Psoas muscle (tissue), 8 donors: ENCODE measurements at regions of chr3 and their contacts with region 1.

Region 1: DNA sequence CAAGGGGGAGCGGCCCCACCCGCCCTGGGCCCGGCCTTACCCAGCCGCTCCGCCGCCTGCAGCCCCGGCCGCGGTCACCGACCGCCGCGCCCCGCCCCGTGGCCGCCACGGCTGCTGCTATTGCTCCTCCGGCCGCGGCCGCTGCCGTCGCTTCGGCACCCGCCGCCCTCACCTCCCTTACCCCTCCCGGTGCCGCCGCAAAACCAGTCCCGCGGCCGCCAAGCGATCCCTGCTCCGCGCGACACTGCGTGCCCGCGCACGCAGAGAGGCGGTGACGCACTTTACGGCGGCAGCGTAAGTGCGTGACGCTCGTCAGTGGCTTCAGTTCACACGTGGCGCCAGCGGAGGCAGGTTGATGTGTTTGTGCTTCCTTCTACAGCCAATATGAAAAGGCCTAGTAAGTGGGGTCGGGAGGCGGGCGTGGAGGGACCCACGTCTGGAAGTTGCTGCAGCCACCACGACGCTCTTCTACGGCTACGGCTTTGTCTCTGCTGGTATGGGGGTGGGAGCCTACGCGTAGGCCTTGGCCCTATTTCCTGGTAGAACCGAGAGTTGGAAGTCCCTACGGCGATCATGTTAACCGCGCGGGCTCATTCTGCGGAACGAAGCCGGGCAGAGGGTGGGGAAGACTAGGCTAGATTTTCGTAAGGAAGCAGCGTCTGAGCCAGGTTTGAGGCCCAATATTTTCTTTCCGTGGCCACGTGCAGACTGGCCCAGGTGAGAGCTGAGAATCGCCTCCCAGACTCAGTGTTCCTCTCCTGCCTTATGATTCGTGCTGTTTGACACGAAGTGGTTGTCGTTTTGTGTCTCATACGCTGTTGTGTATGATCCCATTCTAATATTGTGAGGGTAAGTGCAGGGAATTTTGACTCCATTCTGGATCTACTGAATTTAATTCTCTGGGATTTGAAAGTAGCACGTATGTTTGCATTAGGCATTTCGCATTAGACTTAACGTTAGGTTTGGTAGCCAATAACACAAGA is at the starts of genes GNL3 and PBRM1:
- DNase-seq: peak; percentile 95 to 97
- ATAC-seq: peak; percentile 93 to 95 (median 94)
- H3K4me3 ChIP-seq: peak within 1 kb of the TSS; percentile 91
- H3K27ac ChIP-seq: peak within 1 kb of the TSS; percentile 93
- H3K4me1 ChIP-seq: peaks cover 39% of the 10 kb centered on the region
- H3K27me3 ChIP-seq: no peaks in the 10 kb centered on the region
- CTCF ChIP-seq: no peak
- total RNA-seq, gene GNL3: 47.3 to 109 (median 67.9) TPM
- total RNA-seq, gene PBRM1: 38.0 to 46.7 (median 39.9) TPM

Region 2: GRCh38 chr3:52455283-52456168 is 230.5 kb before region 1 on chr3 and contains the start of gene NISCH:
- intact Hi-C with region 1: loop called in 1 of 2 experiments (anchors 5 kb)
- DNase-seq: peak; percentile 94 to 96
- ATAC-seq: peak; percentile 59 to 70 (median 63)
- H3K4me3 ChIP-seq: peak within 1 kb of the TSS; percentile 73
- H3K27ac ChIP-seq: peak within 1 kb of the TSS; percentile 90
- H3K4me1 ChIP-seq: peaks cover 36% of the 10 kb centered on the region
- H3K27me3 ChIP-seq: no peaks in the 10 kb centered on the region
- CTCF ChIP-seq: no peak
- total RNA-seq, gene NISCH: 16.7 to 33.4 (median 28.1) TPM

Region 3: DNA sequence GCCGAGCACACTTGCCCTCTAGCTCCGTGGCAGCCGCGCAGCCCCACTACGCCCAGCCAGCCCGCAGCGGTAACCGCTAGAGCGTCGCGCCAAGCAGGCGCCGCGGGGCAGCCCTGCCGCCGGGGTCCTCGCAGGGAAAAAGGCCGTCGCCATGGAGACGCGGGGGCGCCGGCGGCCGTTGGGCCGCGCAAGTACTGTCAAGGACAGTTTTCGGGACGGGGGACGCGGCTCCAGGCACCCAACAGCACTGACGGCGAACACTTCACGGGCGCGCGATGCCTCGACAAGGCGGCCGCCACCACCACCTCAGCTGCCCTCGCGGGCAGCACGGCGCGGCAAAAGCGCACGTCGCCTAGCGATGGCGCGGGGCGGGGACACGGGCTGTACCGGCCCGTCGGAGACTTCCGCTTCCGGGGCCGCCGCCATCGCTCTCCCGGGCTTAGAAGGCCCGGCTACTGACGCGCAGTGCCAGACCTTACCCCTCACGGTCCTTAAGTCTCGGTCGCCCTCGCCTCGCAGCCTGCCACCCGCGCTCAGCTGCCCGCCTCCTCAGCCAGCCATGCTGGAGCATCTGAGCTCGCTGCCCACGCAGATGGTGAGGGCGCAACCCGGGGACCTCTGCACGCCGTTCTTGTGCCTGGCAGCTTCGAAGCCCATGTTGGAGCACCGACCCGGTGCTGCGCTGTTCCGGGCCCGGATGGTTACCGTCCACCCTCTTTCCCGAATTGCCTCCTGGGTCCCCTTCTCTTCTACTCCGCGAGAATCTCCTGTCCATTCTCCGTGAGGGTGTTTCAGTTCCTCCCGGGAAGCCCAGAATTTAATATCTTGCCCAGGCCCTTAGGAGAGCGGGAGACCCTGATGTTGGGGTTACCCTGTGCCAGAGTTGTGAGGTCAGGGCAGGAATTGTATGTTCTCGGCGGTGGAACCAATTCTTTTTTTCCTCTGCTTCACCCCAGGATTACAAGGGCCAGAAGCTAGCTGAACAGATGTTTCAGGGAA is 20.0 kb after region 1 on chr3 and contains the starts of genes GLT8D1 and SPCS1:
- intact Hi-C with region 1: loop called (anchors 2 kb)
- DNase-seq: peak; percentile 90 to 94
- ATAC-seq: peak; percentile 94 to 95 (median 95)
- H3K4me3 ChIP-seq: peak within 1 kb of the TSS; percentile 90
- H3K27ac ChIP-seq: peak within 1 kb of the TSS; percentile 83
- H3K4me1 ChIP-seq: peaks cover 25% of the 10 kb centered on the region
- H3K27me3 ChIP-seq: no peaks in the 10 kb centered on the region
- CTCF ChIP-seq: no peak
- total RNA-seq, gene GLT8D1: 12.0 to 20.5 (median 19.8) TPM
- total RNA-seq, gene SPCS1: 55.7 to 85.6 (median 75.3) TPM

Region 4: GRCh38 chr3:53045518-53046170 is 359.6 kb after region 1 on chr3 and contains the start of gene SFMBT1:
- intact Hi-C with region 1: no loop called
- DNase-seq: peak; percentile 72 to 86
- ATAC-seq: peak; percentile 69 to 80 (median 78)
- H3K4me3 ChIP-seq: peak within 1 kb of the TSS; percentile 92
- H3K27ac ChIP-seq: peak within 1 kb of the TSS; percentile 93
- H3K4me1 ChIP-seq: peaks cover 26% of the 10 kb centered on the region
- H3K27me3 ChIP-seq: no peaks in the 10 kb centered on the region
- CTCF ChIP-seq: no peak
- total RNA-seq, gene SFMBT1: 16.0 to 25.0 (median 16.8) TPM